ENCODE measurements at regions of chr2 and their contacts with region 1.

Region 1: GRCh38 chr2:165401285-165401852 is 68.1 kb upstream of the CSRNP3 start:
- DNase-seq: peak; percentile 19
- H3K4me3 ChIP-seq: no peak overlapping the region; a peak in 1 of 4 replicates
- H3K27ac ChIP-seq: no peak overlapping the region
- H3K4me1 ChIP-seq: peaks cover 8 to 26% of the 10 kb centered on the region in 2 experiments; a peak in 3 of 4 replicates
- H3K27me3 ChIP-seq: no peaks in the 10 kb centered on the region
- CTCF ChIP-seq: peak; percentile 86
- EP300 ChIP-seq: no peak
- RAD21 ChIP-seq: peak; percentile 95

Region 2: GRCh38 chr2:164275659-164276058 is 1125.7 kb before region 1 on chr2:
- CTCF ChIA-PET with region 1: no interaction called
- POLR2A ChIA-PET with region 1: no interaction called
- DNase-seq: no peak
- H3K4me3 ChIP-seq: no peak overlapping the region
- H3K27ac ChIP-seq: no peak overlapping the region
- H3K4me1 ChIP-seq: no peaks in the 10 kb centered on the region
- H3K27me3 ChIP-seq: no peaks in the 10 kb centered on the region
- CTCF ChIP-seq: no peak
- EP300 ChIP-seq: no peak
- RAD21 ChIP-seq: no peak

Region 3: DNA sequence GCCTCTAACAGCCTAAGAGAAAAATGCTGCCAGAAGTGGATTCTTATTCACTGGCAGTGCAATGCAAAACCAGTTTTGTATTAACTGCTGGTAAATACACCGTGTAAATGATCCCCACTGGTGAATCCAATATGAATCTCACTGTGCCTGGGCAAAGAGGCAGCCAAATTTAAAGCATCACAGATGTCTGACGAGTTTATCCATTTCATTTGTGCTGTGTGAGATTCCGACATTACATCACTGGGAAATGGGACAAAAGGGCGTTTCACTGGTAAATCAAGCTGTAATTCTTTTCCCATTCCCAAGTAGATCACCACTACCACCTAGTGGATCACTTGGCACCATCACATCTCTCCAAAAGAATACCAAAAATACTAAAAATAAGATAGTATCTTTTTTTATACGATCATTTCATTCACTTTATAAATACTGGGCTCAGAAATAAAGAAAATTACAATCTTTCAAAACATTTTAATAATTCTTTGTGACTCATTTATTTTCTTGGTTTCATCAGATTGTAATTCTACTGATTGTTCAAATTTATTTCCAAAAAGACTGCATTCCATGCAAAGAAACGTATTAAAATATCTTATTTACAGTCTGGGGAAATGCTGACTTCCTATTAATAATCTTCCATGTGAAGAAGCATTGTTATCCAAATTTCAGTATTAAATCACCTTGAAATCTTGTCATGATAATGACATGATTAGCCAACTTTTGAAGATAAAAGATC is 905.7 kb before region 1 on chr2:
- CTCF ChIA-PET with region 1: no interaction called
- POLR2A ChIA-PET with region 1: no interaction called
- DNase-seq: peak; percentile 28
- H3K4me3 ChIP-seq: no peak overlapping the region; a peak in 1 of 4 replicates
- H3K27ac ChIP-seq: no peak overlapping the region
- H3K4me1 ChIP-seq: no peaks in the 10 kb centered on the region
- H3K27me3 ChIP-seq: no peaks in the 10 kb centered on the region
- CTCF ChIP-seq: peak; percentile 67
- EP300 ChIP-seq: no peak
- RAD21 ChIP-seq: peak; percentile 81

Region 4: GRCh38 chr2:165469417-165469816 is 68.0 kb after region 1 on chr2 and contains the start of gene CSRNP3:
- CTCF ChIA-PET with region 1: interaction called, 23 read pairs
- POLR2A ChIA-PET with region 1: no interaction called
- DNase-seq: peak; percentile 53
- H3K4me3 ChIP-seq: peak within 1 kb of the TSS; percentile 66 to 70
- H3K27ac ChIP-seq: peak within 1 kb of the TSS; percentile 69 to 96
- H3K4me1 ChIP-seq: peaks cover 29 to 40% of the 10 kb centered on the region in 2 experiments; a peak in 3 of 4 replicates
- H3K27me3 ChIP-seq: no peaks in the 10 kb centered on the region
- CTCF ChIP-seq: no peak
- EP300 ChIP-seq: no peak; a peak in 1 of 4 replicates
- RAD21 ChIP-seq: peak; percentile 36
- polyA plus RNA-seq, gene CSRNP3: 1.0 and 2.4 TPM in 2 replicates

Region 5: DNA sequence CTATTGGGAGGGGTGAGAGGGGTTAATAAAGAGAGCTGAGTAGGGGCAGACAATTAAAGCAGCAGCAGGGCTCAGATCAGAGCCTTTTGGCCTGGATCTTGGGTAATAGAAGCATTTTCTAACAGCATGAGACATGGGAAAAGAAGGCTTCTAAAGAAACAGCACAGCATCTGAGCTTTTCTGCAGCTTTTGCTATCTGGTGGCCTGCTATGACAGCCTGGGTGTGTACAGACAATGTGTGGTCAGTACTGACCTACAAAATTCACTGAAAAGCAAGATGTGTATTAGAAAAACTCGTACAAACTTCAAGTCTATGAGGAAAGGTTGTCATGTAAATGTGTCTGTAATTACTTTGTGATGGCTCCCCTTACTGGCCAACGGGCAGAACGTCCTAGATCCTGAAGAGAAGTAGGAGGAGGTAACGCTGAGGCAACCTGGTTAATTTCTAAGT is 297.1 kb after region 1 on chr2:
- CTCF ChIA-PET with region 1: interaction called, 24 read pairs
- POLR2A ChIA-PET with region 1: no interaction called
- DNase-seq: peak; percentile 42
- H3K4me3 ChIP-seq: no peak overlapping the region
- H3K27ac ChIP-seq: peak overlapping the region in 1 of 2 experiments; percentile 48; a peak in 2 of 4 replicates
- H3K4me1 ChIP-seq: peaks cover 5 to 13% of the 10 kb centered on the region in 2 experiments; a peak in 3 of 4 replicates
- H3K27me3 ChIP-seq: no peaks in the 10 kb centered on the region
- CTCF ChIP-seq: peak; percentile 67
- EP300 ChIP-seq: no peak
- RAD21 ChIP-seq: peak; percentile 86

Region 6: DNA sequence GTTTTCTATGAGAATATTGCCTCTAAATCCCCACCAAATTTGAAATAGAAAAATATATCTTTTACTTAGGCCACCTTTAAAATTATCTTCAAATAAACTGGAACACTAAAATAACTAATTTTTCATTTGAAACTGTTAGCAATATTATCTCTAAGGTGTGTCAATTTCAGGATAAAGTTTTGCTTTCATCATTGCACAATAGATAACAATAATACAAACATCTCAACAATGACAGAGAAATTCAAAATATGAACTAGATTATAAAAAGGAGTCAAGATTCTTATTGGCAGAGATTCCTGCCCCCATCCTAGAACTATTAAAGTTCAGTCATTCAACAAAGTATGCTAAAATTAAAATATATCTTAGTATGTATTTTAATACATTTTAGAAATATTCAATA is 856.5 kb after region 1 on chr2:
- CTCF ChIA-PET with region 1: no interaction called
- POLR2A ChIA-PET with region 1: no interaction called
- DNase-seq: no peak
- H3K4me3 ChIP-seq: no peak overlapping the region
- H3K27ac ChIP-seq: no peak overlapping the region
- H3K4me1 ChIP-seq: no peaks in the 10 kb centered on the region; a peak in 1 of 4 replicates
- H3K27me3 ChIP-seq: no peaks in the 10 kb centered on the region
- CTCF ChIP-seq: no peak
- EP300 ChIP-seq: no peak
- RAD21 ChIP-seq: no peak